Colonic mucosa (tissue), 4 donors: ENCODE measurements at regions of chr20 and their contacts with region 1.

Region 1: GRCh38 chr20:62386383-62387218 is at the start of gene RPS21:
- DNase-seq: peak; percentile 94
- H3K4me3 ChIP-seq: peak within 1 kb of the TSS; percentile 81
- H3K27ac ChIP-seq: peak within 1 kb of the TSS; percentile 78
- H3K4me1 ChIP-seq: peaks cover 9% of the 10 kb centered on the region
- H3K27me3 ChIP-seq: no peaks in the 10 kb centered on the region
- CTCF ChIP-seq: no peak
- total RNA-seq, gene RPS21: 1,359 to 1,579 TPM

Region 2: DNA sequence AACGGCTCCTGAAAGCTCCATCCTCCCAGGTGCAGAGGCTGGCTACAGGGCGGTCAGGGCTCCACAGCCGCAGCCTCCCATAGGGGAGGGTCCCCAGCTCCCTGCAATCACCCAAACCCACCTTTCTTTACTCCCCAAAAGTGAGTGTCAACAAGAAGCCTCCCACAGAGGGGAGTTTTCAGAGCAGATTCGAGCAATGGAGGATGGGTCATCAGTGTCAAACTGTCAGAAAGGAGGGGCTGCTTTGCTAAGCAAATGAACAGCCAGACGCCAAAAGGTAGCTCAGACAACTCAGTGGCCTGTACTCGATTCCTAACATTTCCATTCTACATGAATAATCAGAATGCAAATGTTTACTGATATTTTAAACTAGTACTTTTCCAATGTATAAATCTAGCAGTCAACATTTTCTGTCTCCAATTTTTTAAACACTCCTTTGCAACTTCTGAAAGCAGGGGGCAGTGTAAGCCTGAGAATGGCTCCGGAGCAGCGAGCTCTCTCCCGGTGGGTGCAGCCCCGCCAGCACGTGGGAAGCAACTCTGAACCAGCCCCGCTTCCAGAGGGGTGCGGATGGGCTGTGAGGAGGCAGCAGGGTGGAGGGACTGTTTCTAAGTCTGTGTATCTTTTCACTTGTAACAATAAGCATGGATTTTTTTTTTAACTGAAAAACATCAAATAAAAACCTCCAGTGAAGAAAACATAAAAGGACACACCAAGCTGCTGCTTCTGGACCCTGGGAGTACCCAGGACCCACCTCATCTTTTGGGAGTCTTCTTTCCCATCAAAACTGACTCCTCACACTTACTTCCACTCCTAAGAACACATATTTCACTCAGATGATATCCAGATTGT is 375.8 kb before region 1 on chr20:
- intact Hi-C with region 1: loop called (anchors 10 kb)
- DNase-seq: peak; percentile 55
- H3K4me3 ChIP-seq: no peak overlapping the region
- H3K27ac ChIP-seq: no peak overlapping the region
- H3K4me1 ChIP-seq: no peaks in the 10 kb centered on the region
- H3K27me3 ChIP-seq: no peaks in the 10 kb centered on the region
- CTCF ChIP-seq: peak; percentile 65

Region 3: GRCh38 chr20:62302341-62303058 is 84.1 kb before region 1 on chr20 and contains the start of gene ADRM1:
- intact Hi-C with region 1: loop called (anchors 5 kb)
- DNase-seq: peak; percentile 95
- H3K4me3 ChIP-seq: peak within 1 kb of the TSS; percentile 81
- H3K27ac ChIP-seq: peak within 1 kb of the TSS; percentile 89
- H3K4me1 ChIP-seq: peaks cover 18% of the 10 kb centered on the region
- H3K27me3 ChIP-seq: no peaks in the 10 kb centered on the region
- CTCF ChIP-seq: peak; percentile 96
- total RNA-seq, gene ADRM1: 70.5 to 109 TPM